ENCODE measurements at regions of chr2 and their contacts with region 1.

Region 1: DNA sequence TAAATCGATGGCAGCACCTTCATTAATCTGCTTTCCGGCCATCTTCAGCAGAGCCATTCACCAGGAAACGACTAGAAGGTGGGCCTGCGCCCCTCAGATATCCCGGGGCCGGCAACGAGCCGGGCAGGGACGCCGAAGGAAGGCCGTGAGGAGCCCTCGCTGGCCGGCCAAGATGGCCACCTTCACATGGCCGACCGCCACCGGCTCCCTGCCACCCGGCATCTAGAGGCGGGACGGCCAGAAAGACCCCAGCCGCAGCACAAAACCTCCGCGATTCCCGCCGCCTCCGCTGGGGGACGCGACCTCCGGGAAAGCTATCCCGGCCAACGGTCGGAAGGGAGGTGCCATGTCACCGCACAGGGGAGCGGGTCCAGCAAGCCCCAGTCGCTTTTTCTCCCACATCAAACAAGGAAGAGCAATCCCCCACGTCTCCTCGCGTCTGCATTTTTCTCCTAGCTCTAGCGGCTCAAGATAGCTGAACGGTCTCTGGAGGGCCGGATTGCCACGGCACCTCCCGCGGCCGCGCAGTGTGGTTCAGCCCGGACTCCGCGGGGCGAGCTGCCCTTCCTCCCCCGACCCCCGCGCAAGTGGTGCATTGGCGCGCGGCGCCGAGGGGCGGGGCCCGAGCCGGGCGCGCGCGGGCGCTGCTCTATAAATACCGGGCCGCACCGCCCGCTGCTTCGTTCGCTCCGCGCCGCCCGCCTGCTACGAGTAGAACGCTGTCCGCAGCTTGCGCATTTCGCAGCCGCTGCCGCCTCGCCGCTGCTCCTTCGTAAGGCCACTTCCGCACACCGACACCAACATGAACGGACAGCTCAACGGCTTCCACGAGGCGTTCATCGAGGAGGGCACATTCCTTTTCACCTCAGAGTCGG is at the start of gene MAT2A:
- DNase-seq: peak; percentile 81
- H3K4me3 ChIP-seq: peak within 1 kb of the TSS; percentile 82
- CTCF ChIP-seq: peak; percentile 75

Region 2: DNA sequence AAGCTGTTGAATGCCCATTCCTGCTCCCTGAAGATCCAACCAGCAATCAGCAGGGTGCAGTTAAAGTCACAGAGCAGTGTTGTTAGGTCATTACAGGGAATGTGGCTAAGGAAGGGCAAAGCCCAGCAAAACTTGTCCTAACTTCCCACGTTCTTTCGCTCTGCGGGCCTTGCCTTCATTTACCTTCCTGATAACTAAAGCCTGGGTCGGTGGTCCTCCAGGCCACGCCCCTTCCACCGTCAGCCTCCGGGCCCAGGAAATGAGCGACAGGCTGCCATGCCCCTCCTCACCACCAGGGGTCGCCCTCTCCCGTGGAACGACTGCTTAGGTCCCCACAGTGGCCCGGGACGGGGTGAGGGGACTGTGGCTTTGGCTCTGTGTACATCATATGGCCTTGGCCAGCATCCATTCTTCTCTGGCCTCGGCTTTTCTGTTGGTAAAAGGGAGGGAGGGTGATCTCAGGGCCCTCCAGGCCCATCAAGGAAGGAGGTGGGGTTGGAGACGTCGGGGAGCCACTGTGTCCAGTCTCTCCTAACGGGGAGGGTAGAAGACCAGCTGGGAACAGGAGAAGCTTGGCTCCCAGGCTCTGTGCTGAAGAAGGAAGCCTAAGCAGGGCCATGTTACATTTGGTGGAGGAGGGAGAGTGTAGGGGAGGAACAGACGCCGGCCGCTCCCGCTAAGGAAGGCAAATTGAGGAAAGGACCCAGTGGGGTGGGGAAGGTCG is 118.0 kb before region 1 on chr2:
- in situ Hi-C with region 1: loop called (anchors 5 kb)
- DNase-seq: peak; percentile 24
- H3K4me3 ChIP-seq: no peak overlapping the region
- CTCF ChIP-seq: peak; percentile 92

Region 3: GRCh38 chr2:85445316-85446295 is 93.1 kb before region 1 on chr2:
- in situ Hi-C with region 1: no loop called
- DNase-seq: no peak
- H3K4me3 ChIP-seq: no peak overlapping the region
- CTCF ChIP-seq: no peak

Region 4: DNA sequence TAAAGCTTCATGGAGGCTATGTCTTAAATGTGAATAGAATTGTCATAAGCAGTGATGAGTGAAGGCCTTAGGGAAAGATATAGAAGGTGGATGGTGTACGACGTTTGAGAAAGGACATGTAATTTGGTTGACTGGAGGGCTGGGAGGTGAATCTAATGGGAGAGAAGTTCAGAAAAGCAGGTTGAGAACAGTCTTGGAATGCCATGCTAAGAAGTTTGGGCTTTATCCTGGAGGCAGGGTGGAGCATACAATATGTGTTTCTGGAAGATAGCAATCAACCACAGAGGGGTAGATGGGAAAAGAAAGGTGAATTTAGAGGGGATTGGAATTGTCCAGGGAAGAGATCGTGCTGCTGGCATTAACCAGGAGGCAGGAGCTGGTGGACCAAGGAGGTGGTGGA is 31.6 kb after region 1 on chr2:
- in situ Hi-C with region 1: no loop called
- DNase-seq: no peak
- H3K4me3 ChIP-seq: no peak overlapping the region
- CTCF ChIP-seq: no peak

Region 5: DNA sequence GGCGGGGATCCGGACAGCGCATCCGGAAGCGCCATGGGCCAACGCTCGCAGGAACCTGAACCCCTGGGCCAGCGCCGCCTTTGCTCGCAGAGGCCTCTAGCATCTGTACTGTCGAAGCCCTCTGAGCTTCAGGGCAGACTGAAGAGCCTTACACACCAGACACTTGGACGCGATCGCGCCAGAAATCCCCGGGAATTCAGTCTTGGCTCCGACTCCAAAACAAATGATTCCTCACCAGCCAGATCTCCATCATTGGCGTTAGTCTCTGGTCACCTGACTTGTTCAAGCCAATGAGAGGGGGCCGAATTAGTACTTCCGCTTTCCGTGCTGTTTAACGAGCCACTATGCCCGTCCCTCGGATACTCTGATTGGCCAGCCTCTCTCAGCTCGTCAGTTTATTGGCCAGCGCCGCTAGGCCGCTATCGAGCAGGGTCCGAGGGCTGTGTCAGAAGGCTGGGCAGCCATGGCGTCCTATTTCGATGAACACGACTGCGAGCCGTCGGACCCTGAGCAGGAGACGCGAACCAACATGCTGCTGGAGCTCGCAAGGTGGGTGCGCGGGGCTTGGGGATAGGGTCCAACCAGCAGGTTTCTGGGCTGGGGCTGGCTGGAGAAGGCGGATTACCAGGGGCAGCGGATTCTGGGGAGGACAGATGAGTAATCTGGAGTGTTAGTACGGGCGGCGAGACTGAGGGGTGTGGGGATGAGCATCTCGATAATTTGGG is 56.7 kb after region 1 on chr2 and contains the start of gene RNF181:
- in situ Hi-C with region 1: no loop called
- DNase-seq: peak; percentile 99
- H3K4me3 ChIP-seq: peak within 1 kb of the TSS; percentile 86
- CTCF ChIP-seq: no peak

Measured in astrocyte of the cerebellum (primary cell).